Activated naive CD4-positive, alpha-beta T cell treated with anti-CD3 and anti-CD28 coated beads for 36 hours (primary cell): ENCODE measurements at regions of chr13 and their contacts with region 1.

Region 1: GRCh38 chr13:79451500-79451962 is 29.4 kb upstream of the NDFIP2 start:
- DNase-seq: peak; percentile 97
- H3K4me3 Mint-ChIP-seq: peak overlapping the region; percentile 68
- H3K27ac Mint-ChIP-seq: peak overlapping the region; percentile 93
- H3K4me1 Mint-ChIP-seq: peaks cover 62% of the 10 kb centered on the region
- H3K27me3 Mint-ChIP-seq: no peaks in the 10 kb centered on the region

Region 2: GRCh38 chr13:79194272-79194671 is 257.3 kb before region 1 on chr13:
- CTCF ChIA-PET with region 1: no interaction called
- intact Hi-C with region 1: loop called (anchors 1 kb)
- DNase-seq: peak; percentile 76
- H3K4me3 Mint-ChIP-seq: no peak overlapping the region
- H3K27ac Mint-ChIP-seq: no peak overlapping the region
- H3K4me1 Mint-ChIP-seq: peaks cover 40% of the 10 kb centered on the region
- H3K27me3 Mint-ChIP-seq: no peaks in the 10 kb centered on the region

Region 3: GRCh38 chr13:79501538-79502232 is 50.2 kb after region 1 on chr13:
- CTCF ChIA-PET with region 1: interaction called, 3 read pairs
- intact Hi-C with region 1: loop called (anchors 1 kb)
- DNase-seq: no peak
- H3K4me3 Mint-ChIP-seq: peak overlapping the region; percentile 17
- H3K27ac Mint-ChIP-seq: peak overlapping the region; percentile 81
- H3K4me1 Mint-ChIP-seq: peaks cover 83% of the 10 kb centered on the region
- H3K27me3 Mint-ChIP-seq: no peaks in the 10 kb centered on the region

Region 4: DNA sequence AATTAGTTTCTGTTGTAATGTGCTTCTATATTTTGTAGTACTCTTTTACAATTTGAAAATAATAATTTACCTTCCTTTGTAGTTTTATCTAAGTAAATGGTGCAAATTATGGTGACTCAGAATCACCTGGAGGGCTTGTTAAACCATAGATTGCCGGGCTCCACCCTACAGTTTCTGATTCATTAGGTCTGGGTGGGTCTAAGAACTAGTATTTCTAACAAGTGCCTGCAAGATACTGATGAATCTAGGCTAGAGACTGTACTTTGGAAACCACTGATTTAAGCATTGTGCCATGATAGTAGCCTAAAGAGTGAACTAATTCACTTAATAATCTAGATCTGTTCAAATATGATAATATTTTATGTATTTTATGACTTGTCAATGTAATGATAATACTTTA is 1326.8 kb after region 1 on chr13:
- CTCF ChIA-PET with region 1: no interaction called
- intact Hi-C with region 1: no loop called
- DNase-seq: no peak
- H3K4me3 Mint-ChIP-seq: no peak overlapping the region
- H3K27ac Mint-ChIP-seq: no peak overlapping the region
- H3K4me1 Mint-ChIP-seq: no peaks in the 10 kb centered on the region
- H3K27me3 Mint-ChIP-seq: no peaks in the 10 kb centered on the region